CD4-positive, alpha-beta memory T cell (primary cell): ENCODE measurements at regions of chr3 and their contacts with region 1.

Region 1: GRCh38 chr3:69161587-69162307 is 39.4 kb upstream of the LMOD3 start:
- DNase-seq: peak; percentile 52 to 60 (median 56)
- H3K4me3 ChIP-seq: no peak overlapping the region
- H3K4me3 Mint-ChIP-seq: no peak overlapping the region
- H3K27ac ChIP-seq: no peak overlapping the region
- H3K27ac Mint-ChIP-seq: no peak overlapping the region
- H3K4me1 ChIP-seq: no peaks in the 10 kb centered on the region
- H3K4me1 Mint-ChIP-seq: peaks cover 5 to 9% (median 5%) of the 10 kb centered on the region in 4 donors
- H3K27me3 ChIP-seq: no peaks in the 10 kb centered on the region
- H3K27me3 Mint-ChIP-seq: peaks cover 2 to 6% of the 10 kb centered on the region in 2 donors

Region 2: DNA sequence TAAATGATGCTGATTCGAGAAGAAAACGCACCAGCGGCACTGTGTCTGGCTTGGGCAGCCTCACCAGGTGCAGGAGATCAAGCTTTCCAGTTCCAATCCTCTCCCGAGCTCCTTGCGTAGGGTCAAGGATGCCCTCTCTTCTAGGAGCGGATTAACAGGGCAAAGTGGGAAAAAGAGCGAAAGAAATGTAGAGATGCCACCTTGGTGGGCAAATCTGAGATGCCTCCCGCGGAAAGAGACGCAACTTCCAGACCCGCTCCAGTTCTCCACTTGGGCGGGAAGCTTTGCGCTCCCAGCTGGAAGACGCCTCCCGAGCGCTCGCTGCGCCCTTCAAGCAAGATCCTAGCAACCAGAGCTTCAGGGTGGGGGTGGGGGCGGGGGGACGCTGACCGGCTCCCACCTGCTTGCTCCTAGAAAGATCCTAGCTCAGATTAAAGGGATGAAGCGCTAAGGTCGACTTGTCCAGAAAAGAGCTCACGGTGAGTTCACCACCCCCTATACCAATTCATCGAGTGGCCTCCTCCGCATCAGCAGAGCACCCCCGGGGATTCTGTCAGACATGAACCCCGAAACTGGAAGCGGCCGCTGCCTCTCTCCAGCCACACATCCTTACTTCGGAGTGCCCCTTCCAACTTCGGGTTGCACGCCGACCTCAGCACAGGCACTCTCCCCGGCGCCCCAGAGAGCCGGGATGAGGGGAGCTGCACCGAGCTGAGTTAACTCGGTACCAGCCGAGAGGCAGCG is 230.2 kb before region 1 on chr3:
- CTCF ChIA-PET with region 1: no interaction called
- POLR2A ChIA-PET with region 1: no interaction called
- intact Hi-C with region 1: no loop called
- DNase-seq: no peak
- H3K4me3 ChIP-seq: no peak overlapping the region
- H3K4me3 Mint-ChIP-seq: peak overlapping the region in 2 of 8 donors; percentile 13 to 54
- H3K27ac ChIP-seq: no peak overlapping the region
- H3K27ac Mint-ChIP-seq: no peak overlapping the region
- H3K4me1 ChIP-seq: no peaks in the 10 kb centered on the region
- H3K4me1 Mint-ChIP-seq: peaks cover 0 to 14% (median 7%) of the 10 kb centered on the region in 4 donors
- H3K27me3 ChIP-seq: peaks cover 12% of the 10 kb centered on the region
- H3K27me3 Mint-ChIP-seq: peaks cover 47 to 48% of the 10 kb centered on the region in 2 donors

Region 3: GRCh38 chr3:69120879-69121464 is 40.8 kb before region 1 on chr3:
- CTCF ChIA-PET with region 1: interaction called, 31 read pairs
- POLR2A ChIA-PET with region 1: no interaction called
- intact Hi-C with region 1: loop called (anchors 2 kb)
- DNase-seq: peak; percentile 75 to 80 (median 79)
- H3K4me3 ChIP-seq: no peak overlapping the region
- H3K4me3 Mint-ChIP-seq: no peak overlapping the region
- H3K27ac ChIP-seq: no peak overlapping the region
- H3K27ac Mint-ChIP-seq: no peak overlapping the region
- H3K4me1 ChIP-seq: no peaks in the 10 kb centered on the region
- H3K4me1 Mint-ChIP-seq: peaks cover 5% of the 10 kb centered on the region in 4 donors
- H3K27me3 ChIP-seq: no peaks in the 10 kb centered on the region
- H3K27me3 Mint-ChIP-seq: peaks cover 0 to 1% of the 10 kb centered on the region in 2 donors

Region 4: GRCh38 chr3:69194431-69195165 is 32.9 kb after region 1 on chr3:
- CTCF ChIA-PET with region 1: interaction called, 16 read pairs
- POLR2A ChIA-PET with region 1: no interaction called
- intact Hi-C with region 1: no loop called
- DNase-seq: no peak
- H3K4me3 ChIP-seq: no peak overlapping the region
- H3K4me3 Mint-ChIP-seq: no peak overlapping the region
- H3K27ac ChIP-seq: no peak overlapping the region
- H3K27ac Mint-ChIP-seq: peak overlapping the region in 1 of 7 donors; percentile 36
- H3K4me1 ChIP-seq: peaks cover 17% of the 10 kb centered on the region
- H3K4me1 Mint-ChIP-seq: peaks cover 21 to 43% (median 31%) of the 10 kb centered on the region in 4 donors
- H3K27me3 ChIP-seq: no peaks in the 10 kb centered on the region
- H3K27me3 Mint-ChIP-seq: no peaks in the 10 kb centered on the region

Region 5: DNA sequence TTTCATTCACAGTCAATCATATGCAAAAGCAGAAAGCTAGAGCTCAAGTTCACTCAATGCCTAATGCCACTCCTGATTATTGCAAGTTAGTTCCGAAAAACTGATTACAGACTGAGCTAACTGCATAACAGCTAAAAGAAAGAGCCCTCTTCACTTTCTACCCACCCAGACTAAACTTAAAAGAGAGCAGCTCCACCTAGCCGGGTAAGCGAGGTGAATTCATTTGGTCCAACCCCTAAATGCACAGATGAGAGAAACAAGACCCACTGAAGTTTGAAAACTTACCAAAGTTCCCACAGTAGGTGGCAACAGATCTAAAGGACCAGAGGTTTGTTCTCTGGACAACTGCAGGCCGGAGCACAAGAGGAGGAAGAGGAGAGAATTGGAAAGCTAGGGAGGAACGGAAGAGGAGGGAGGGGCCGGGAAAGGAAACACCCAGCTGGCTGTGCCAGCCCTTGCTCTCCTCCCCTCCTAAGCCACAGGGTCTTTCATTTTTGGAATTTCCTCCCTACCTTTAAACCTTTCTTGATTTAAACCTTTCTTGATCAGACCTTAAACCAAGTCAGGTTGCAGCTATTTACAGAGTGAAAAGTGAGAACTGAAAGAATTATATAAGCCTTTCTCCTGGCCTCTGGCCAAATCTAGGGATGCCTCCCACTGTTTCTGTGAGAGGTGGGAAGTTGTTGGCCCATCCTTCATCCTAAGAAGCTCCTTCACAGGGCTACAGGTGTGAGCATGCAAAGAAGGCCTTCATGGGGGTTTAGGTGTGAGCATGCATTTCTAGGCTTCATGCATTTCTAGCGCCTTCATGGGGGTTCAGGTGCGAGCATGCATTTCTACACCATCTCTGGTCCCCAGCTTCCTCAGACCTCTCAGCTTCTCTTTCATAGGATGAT is 75.3 kb after region 1 on chr3:
- CTCF ChIA-PET with region 1: interaction called, 29 read pairs
- POLR2A ChIA-PET with region 1: no interaction called
- intact Hi-C with region 1: loop called (anchors 1 kb)
- DNase-seq: peak in 1 of 5 donors; percentile 16
- H3K4me3 ChIP-seq: no peak overlapping the region
- H3K4me3 Mint-ChIP-seq: peak overlapping the region; percentile 67 to 89 (median 84)
- H3K27ac ChIP-seq: no peak overlapping the region
- H3K27ac Mint-ChIP-seq: peak overlapping the region; percentile 50 to 95 (median 62)
- H3K4me1 ChIP-seq: peaks cover 31% of the 10 kb centered on the region
- H3K4me1 Mint-ChIP-seq: peaks cover 15 to 29% (median 21%) of the 10 kb centered on the region in 4 donors
- H3K27me3 ChIP-seq: no peaks in the 10 kb centered on the region
- H3K27me3 Mint-ChIP-seq: no peaks in the 10 kb centered on the region

Region 6: DNA sequence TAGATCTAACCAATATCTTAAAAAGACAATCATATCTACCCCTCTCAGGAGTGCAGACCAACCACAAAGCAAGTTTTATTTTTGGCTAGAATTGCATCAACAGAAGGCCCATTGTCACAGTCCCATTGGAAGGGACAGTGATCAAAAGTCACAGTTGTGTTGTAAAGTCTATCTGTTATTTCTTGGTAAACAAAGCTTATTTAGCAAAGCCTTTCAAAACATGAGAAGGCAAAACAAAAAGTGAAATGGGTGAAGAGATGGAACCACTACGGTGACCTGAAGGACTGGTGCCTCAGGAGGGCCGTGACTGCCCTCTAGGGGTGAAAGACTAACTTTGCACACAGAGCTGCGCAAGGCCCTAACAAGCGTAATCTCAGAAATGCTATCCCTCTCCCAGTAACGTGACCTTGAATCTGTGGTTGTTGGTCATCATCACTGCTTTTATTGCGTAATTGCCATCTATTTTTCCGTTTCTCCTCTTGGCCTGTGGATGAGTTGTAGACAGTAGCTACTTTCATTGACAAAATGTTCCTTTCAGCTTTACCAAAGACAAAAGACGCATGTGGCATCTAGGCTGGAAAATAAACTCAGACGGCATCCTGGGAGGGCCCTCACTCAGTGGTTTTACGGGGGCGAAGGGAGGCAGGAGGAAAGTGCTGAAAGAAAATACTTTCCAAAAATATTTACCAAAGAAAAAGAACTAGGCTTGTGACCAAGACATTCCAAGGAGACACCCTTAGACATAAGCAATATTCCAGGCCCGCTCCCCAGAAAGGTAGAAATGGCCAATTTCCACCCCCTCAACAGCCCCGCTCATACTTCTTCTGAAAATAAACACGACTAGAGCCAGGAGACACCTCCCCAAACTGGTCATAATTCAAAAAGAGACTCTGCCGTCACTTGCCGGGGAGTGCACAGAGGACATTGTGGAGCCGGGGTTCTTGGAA is 144.8 kb after region 1 on chr3:
- CTCF ChIA-PET with region 1: interaction called, 529 read pairs
- POLR2A ChIA-PET with region 1: interaction called, 19 read pairs
- intact Hi-C with region 1: loop called (anchors 1 kb)
- DNase-seq: peak; percentile 69 to 74 (median 72)
- H3K4me3 ChIP-seq: no peak overlapping the region
- H3K4me3 Mint-ChIP-seq: peak overlapping the region in 2 of 8 donors; percentile 2 to 30
- H3K27ac ChIP-seq: no peak overlapping the region
- H3K27ac Mint-ChIP-seq: peak overlapping the region in 2 of 7 donors; percentile 19 to 28
- H3K4me1 ChIP-seq: no peaks in the 10 kb centered on the region
- H3K4me1 Mint-ChIP-seq: peaks cover 4 to 8% (median 6%) of the 10 kb centered on the region in 4 donors
- H3K27me3 ChIP-seq: no peaks in the 10 kb centered on the region
- H3K27me3 Mint-ChIP-seq: no peaks in the 10 kb centered on the region

Region 7: DNA sequence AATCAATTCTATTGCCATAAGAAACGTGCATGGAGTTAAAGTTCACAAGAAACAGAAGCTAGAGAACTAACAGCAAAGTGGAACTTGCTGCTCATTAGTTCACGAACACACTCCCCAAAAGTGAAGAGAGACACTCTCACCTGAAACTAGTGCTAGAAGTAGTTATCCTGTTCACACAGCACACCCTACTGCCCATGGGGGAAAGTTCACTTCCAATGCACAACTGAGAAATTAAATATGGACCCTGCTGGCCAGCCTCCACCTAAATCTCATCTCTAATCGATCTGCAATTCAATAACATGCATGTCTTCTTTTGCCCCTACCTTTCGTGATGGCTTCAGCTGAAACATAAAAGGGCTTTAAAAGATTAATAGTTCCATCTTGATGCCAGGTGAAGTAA is 263.5 kb after region 1 on chr3:
- CTCF ChIA-PET with region 1: interaction called, 20 read pairs
- POLR2A ChIA-PET with region 1: no interaction called
- intact Hi-C with region 1: loop called (anchors 1 kb)
- DNase-seq: peak in 4 of 5 donors; percentile 8 to 28 (median 12)
- H3K4me3 ChIP-seq: no peak overlapping the region
- H3K4me3 Mint-ChIP-seq: no peak overlapping the region
- H3K27ac ChIP-seq: no peak overlapping the region
- H3K27ac Mint-ChIP-seq: no peak overlapping the region
- H3K4me1 ChIP-seq: no peaks in the 10 kb centered on the region
- H3K4me1 Mint-ChIP-seq: no peaks in the 10 kb centered on the region
- H3K27me3 ChIP-seq: no peaks in the 10 kb centered on the region
- H3K27me3 Mint-ChIP-seq: peaks cover 0 to under 1% of the 10 kb centered on the region in 2 donors

Region 8: GRCh38 chr3:69948246-69948862 is 786.6 kb after region 1 on chr3:
- CTCF ChIA-PET with region 1: no interaction called
- POLR2A ChIA-PET with region 1: no interaction called
- intact Hi-C with region 1: loop called (anchors 5 kb)
- DNase-seq: no peak
- H3K4me3 ChIP-seq: no peak overlapping the region
- H3K4me3 Mint-ChIP-seq: no peak overlapping the region
- H3K27ac ChIP-seq: no peak overlapping the region
- H3K27ac Mint-ChIP-seq: no peak overlapping the region
- H3K4me1 ChIP-seq: no peaks in the 10 kb centered on the region
- H3K4me1 Mint-ChIP-seq: no peaks in the 10 kb centered on the region
- H3K27me3 ChIP-seq: no peaks in the 10 kb centered on the region
- H3K27me3 Mint-ChIP-seq: no peaks in the 10 kb centered on the region